ENCODE measurements at regions of chr3 and their contacts with region 1.

Region 1: DNA sequence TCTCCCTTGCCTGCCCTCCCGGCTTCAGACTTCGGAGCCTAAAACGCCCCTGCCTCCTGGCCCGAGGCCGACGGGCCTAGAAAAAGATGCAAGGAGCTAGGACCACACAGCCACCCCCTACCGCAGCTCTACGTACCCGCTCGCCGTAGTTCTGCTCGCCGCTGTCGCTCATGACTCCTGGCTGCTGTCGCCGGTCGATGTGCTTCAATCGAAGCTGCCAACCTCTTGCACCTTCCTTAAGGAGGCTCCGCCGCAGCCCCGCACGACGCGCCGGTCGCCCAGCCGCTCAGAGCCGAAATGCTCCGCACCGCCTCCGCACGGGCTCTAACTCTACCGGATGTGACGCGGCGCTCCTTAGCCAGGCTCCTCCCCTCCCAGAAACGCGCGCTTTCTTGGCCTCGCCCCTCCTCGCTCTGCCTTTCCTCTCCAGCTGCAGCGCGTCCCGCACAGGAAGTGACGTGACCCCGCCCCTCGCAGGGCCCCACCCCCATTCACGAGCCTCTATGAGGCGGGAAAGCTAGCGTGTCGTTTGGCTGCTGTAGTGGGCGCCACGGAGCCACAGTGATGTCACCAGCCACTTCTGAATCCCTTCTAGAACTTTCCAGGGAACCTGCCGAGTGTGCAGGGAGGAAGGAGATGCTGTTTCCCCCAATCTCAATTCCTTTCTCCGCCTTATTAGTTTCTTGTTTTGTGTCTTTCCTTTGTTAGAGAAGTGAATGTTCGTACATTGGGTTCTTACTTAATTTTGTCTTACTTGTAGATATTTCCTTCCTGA is at the start of gene TRA2B:
- DNase-seq: peak; percentile 95 to 99 (median 96)
- ATAC-seq: peak; percentile 87
- H3K4me3 ChIP-seq: peak within 1 kb of the TSS; percentile 99
- H3K27ac ChIP-seq: peak within 1 kb of the TSS; percentile 100
- H3K4me1 ChIP-seq: peaks cover 0 to 10% of the 10 kb centered on the region in 2 experiments; a peak in 2 of 5 replicates
- H3K27me3 ChIP-seq: no peaks in the 10 kb centered on the region
- CTCF ChIP-seq: peak; percentile 30 to 44 (median 43); a peak in 3 of 6 replicates
- EP300 ChIP-seq: peak; percentile 35
- POLR2A ChIP-seq: peak; percentile 100
- RAD21 ChIP-seq: no peak
- polyA plus RNA-seq, gene TRA2B: 105 to 132 TPM

Region 2: GRCh38 chr3:185702262-185703225 is 235.3 kb before region 1 on chr3:
- CTCF ChIA-PET with region 1: no interaction called
- POLR2A ChIA-PET with region 1: no interaction called
- in situ Hi-C with region 1: no loop called
- intact Hi-C with region 1: no loop called
- DNase-seq: peak in 3 of 4 experiments; percentile 15 to 33 (median 23)
- ATAC-seq: peak; percentile 47
- H3K4me3 ChIP-seq: no peak overlapping the region
- H3K27ac ChIP-seq: peak overlapping the region; percentile 73; the same call in 2 of the 3 replicates
- H3K4me1 ChIP-seq: peaks cover 4 to 32% of the 10 kb centered on the region in 2 experiments
- H3K27me3 ChIP-seq: no peaks in the 10 kb centered on the region
- CTCF ChIP-seq: no peak
- EP300 ChIP-seq: no peak
- POLR2A ChIP-seq: no peak
- RAD21 ChIP-seq: no peak

Region 3: DNA sequence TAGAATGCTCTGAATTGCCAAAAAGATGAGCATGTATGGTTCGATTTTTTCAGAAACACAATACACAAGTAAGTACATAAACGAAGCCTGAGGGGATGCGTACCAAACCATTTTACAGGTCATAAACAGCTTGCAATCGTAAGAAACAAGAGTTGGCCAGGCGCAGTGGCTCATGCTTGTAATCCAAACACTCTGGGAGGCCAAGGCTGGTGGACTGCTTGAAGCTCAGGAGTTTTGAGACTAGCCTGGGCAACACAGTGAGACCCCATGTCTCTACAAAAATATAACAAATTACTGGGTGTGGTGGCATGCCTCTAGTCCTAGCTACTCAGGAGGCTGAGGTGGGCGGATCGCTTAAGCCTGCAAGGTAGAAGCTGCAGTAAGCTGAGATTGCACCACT is 13.5 kb before region 1 on chr3:
- CTCF ChIA-PET with region 1: no interaction called
- POLR2A ChIA-PET with region 1: interaction called, 64 read pairs
- in situ Hi-C with region 1: no loop called
- intact Hi-C with region 1: no loop called
- DNase-seq: no peak
- ATAC-seq: no peak
- H3K4me3 ChIP-seq: no peak overlapping the region
- H3K27ac ChIP-seq: no peak overlapping the region
- H3K4me1 ChIP-seq: peaks cover 0 to 14% of the 10 kb centered on the region in 2 experiments; a peak in 2 of 5 replicates
- H3K27me3 ChIP-seq: no peaks in the 10 kb centered on the region
- CTCF ChIP-seq: no peak
- EP300 ChIP-seq: no peak
- POLR2A ChIP-seq: no peak
- RAD21 ChIP-seq: no peak

Region 4: DNA sequence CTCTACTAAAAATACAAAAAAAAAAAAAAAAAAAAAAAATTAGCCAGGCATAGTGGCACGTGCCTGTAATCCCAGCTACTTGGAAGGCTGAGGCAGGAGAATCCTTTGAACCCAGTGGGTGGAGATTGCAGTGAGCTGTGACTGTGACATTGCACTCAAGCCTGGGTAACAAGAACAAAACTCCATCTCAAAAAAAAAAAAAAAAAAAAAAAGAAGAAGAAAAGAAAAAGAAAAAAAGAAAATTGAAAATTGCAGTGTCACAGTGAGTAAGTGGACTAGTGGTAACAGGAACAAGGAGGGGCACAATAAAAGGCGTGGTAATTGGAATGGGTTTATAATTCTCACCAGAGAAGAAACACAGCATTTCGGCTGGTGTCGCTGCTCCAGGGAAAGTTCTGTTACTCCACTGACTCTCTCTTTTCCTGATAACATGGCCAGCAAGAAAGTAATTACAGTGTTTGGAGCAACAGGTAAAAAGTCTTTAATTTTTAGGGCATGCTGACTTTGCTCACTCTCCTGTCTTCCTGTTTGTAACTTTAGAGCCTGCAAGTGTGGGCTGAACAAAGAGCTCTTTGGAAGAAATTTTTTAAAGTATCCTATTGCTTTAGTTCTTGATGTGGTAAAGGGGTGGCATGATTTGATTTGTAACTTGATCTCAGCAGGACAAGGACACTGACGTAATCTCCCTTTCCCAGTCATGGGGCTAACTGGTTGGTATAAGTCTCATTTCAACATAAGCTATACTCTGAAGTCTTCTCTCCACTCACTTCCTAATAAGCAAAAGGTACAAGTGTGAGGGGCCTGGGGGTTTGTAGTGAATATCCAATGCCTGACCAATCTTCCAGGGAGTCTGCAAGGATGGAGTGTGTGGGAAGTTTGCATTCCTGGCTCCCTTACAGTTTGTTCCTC is 22.0 kb after region 1 on chr3:
- CTCF ChIA-PET with region 1: no interaction called
- POLR2A ChIA-PET with region 1: interaction called, 13 read pairs
- in situ Hi-C with region 1: no loop called
- intact Hi-C with region 1: no loop called
- DNase-seq: peak; percentile 30 to 53 (median 38)
- ATAC-seq: peak; percentile 85
- H3K4me3 ChIP-seq: no peak overlapping the region
- H3K27ac ChIP-seq: peak overlapping the region; percentile 57; the same call in 2 of the 3 replicates
- H3K4me1 ChIP-seq: peaks cover 3 to 10% of the 10 kb centered on the region in 2 experiments; a peak in 2 of 5 replicates
- H3K27me3 ChIP-seq: no peaks in the 10 kb centered on the region
- CTCF ChIP-seq: 0 out of 6 replicates have a peak, but pooled peaks of 1 of the 3 experiments have one; percentile 1
- EP300 ChIP-seq: no peak
- POLR2A ChIP-seq: no peak
- RAD21 ChIP-seq: no peak